Right ventricle myocardium superior (tissue), 1 donor: ENCODE measurements at regions of chr2 and their contacts with region 1.

Region 1: DNA sequence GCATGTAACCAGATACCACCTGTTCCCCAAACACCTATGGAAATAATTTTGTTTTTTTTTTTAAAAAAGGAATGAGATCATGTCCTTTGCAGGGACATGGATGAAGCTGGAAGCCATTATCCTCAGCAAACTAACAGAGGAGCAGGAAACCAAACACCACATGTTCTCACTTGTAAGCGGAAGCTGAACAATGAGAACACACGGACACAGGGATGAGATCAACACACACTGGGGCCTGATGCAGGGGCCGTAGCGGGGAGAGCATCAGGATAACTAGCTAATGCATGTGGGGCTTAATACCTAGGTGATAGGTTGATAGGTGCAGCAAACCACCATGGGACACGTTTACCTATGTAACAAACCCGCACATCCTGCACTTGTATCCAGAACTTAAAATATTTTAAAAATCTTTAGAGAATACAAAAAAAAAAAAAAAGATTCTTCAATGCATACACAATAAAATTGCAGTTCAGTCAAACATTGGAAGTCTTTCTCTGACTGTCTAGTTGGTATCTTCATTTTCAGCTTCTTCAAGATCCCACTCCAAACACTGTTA is 11.6 kb upstream of the CASP10 start:
- DNase-seq: no peak
- ATAC-seq: no peak

Region 2: DNA sequence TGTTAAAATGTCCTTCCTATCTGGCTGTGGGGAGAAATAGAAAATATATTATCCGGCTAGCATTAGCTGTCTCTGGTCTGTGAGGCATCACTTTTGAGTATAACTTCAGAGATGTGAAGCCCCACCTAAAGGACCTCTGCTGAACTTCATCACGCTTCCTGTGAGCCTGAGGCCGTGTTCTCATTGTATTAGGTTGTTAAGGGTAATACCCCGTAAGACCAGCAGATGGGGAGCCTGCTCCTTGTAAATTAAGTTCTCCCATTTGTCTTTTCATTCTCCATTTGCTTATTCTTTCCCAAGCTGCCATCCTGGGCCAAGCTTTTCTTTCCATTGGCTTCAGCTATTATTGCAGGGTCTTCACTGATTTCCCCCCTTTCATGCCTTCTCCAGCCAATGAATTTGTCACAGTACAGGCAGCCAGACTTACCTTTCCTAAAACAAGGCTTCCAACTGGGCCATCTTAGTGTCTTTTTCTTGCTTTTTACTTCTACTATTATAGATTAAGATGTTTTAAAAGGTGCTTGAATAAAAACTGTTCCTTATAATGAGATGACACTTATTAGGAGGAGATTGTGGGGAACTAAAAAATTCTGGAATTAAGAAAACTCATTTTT is 269.8 kb before region 1 on chr2:
- intact Hi-C with region 1: loop called (anchors 5 kb)
- DNase-seq: no peak
- ATAC-seq: peak; percentile 77

Region 3: GRCh38 chr2:200963124-200963917 is 208.0 kb before region 1 on chr2 and contains the start of gene ORC2:
- intact Hi-C with region 1: loop called (anchors 10 kb)
- DNase-seq: peak; percentile 96
- ATAC-seq: peak; percentile 99
- total RNA-seq, gene ORC2: 20.4 TPM